ENCODE measurements at regions of chr1 and their contacts with region 1.

Region 1: DNA sequence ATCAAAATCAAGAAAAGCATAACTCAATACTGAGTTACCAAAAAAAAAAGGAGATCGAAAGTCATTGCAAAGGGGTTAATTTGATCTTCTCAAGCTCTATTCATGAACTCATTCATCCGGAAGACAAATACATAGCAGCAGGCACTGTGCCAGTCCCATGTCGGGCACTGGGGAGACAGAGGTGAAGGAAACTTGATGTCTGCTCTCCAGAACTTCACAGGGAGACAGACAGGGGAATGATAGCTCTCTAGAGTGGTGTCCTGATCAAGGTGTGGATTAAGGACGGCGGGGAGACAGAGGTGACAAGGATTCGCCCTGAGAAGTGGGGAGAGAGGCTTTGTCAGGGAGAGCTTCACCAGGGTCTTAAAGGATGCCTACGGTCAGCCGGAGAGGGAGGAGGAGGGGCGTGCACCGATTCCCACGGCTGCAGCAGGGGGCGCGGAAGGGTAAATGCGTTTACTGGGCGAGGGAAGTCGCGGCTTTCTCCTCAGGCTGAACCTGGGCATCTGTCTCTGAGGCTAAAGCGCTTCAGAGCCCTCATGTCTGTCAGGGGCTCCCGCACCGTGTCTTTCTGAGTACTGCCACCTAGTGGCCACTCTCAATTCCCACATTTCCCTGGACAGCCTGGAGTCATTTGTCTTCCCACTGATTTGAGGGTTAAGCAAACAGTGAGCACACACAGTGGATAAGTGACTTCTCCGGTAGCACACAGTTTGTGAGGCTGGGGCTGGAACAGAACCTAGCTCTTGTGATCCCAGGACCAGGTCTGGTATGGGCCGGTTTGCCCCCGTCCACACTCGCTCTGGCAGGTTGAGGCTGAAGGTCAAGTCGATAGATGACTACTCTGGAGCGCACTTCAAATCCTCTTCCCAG is 152.8 kb downstream of the TENT5C start:
- DNase-seq: peak; percentile 80 to 83
- H3K4me3 ChIP-seq: peak overlapping the region; percentile 60
- H3K27ac ChIP-seq: no peak overlapping the region
- H3K4me1 ChIP-seq: peaks cover 21% of the 10 kb centered on the region
- H3K27me3 ChIP-seq: no peaks in the 10 kb centered on the region
- CTCF ChIP-seq: peak; percentile 98

Region 2: DNA sequence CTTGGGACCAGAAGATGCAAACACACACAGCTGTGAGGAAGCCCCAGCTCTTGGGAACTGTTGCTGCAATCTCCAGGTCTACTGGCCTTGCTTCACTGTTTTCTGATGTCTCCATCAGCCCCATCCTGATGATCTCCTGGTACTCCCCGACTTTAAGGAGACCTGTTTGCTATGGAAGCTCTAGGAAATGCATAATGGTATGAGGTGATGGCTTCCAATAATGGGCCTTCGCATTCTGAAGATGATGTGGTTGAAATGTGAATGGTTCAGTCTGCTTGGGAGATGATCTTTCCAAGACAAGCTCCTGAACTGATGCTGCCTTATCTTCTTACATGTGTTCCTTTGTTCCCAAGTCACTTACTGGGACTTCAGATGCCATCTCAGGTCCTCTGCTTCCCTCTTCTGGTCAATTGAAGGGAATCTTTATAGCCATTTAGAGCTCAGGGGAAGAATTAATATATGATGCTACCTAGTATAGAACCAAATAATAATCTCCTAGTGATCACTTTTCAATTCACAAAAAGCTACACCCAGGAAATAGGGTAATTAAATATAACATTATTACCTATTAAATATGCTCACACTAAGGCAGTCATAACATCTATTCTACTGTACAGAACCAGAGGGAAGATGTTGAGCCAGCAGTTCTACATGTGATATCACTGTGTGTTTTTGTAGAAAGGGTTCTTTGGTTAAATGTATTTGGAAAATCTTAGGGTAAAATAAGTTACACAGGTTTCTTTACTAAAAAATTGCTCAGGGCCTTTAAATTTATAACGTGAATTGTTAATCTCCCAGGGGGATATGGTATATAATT is 474.1 kb before region 1 on chr1:
- CTCF ChIA-PET with region 1: no interaction called
- POLR2A ChIA-PET with region 1: no interaction called
- intact Hi-C with region 1: loop called (anchors 10 kb)
- DNase-seq: peak; percentile 39 to 81
- H3K4me3 ChIP-seq: no peak overlapping the region
- H3K27ac ChIP-seq: no peak overlapping the region
- H3K4me1 ChIP-seq: peaks cover 10% of the 10 kb centered on the region
- H3K27me3 ChIP-seq: no peaks in the 10 kb centered on the region
- CTCF ChIP-seq: peak; percentile 98

Region 3: DNA sequence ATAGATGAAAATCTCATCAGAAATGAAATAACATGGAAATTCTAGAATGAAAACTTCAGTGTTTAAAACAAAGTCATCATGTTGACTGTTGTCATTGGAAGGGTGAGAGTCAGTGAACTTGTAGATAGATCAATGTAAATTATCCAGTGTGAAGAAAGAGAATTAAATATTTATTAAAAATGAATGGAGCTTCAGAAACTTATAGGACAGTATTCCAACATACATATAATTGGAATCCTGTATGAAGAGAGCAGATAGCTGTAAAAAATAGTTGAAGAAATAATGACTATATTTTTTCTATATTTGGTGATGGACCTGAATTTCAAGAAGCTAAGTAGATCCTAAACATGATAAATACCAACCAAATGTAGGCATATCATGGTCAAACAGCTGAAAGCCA is 331.4 kb before region 1 on chr1:
- CTCF ChIA-PET with region 1: no interaction called
- POLR2A ChIA-PET with region 1: no interaction called
- intact Hi-C with region 1: no loop called
- DNase-seq: no peak
- H3K4me3 ChIP-seq: no peak overlapping the region
- H3K27ac ChIP-seq: no peak overlapping the region
- H3K4me1 ChIP-seq: no peaks in the 10 kb centered on the region
- H3K27me3 ChIP-seq: no peaks in the 10 kb centered on the region
- CTCF ChIP-seq: no peak

Region 4: DNA sequence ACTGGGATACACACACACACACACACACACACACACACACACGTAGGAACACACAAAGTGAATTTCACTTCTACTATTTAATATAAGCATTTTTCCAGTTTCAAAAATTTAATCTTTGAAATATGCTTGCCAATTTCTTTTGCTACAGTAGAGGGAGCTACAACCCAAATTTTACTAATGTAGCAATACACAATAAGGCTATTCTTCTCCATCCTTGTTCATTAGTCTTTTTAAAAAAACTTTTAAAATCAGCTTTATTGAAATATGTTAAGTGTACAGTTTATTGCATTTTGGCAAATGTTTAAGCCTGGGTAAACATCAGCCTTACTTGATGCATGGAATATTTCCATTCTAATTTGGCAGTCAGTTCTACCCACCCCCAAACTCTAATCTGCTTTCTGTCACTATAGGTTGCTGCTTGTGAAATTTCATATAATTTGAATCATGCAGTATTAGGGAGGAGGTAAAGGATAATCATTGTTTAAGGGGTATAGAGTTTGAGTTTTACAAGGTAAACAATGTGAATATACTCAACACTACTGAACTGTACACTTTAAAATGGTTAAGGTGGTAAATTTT is 245.8 kb before region 1 on chr1:
- CTCF ChIA-PET with region 1: interaction called, 13 read pairs
- POLR2A ChIA-PET with region 1: interaction called, 3 read pairs
- intact Hi-C with region 1: loop called (anchors 1 kb)
- DNase-seq: no peak
- H3K4me3 ChIP-seq: no peak overlapping the region
- H3K27ac ChIP-seq: no peak overlapping the region
- H3K4me1 ChIP-seq: no peaks in the 10 kb centered on the region
- H3K27me3 ChIP-seq: no peaks in the 10 kb centered on the region
- CTCF ChIP-seq: peak; percentile 97

Region 5: GRCh38 chr1:117605774-117606648 is 152.7 kb before region 1 on chr1 and contains the start of gene TENT5C:
- CTCF ChIA-PET with region 1: interaction called, 15 read pairs
- POLR2A ChIA-PET with region 1: no interaction called
- intact Hi-C with region 1: loop called (anchors 1 kb)
- DNase-seq: peak; percentile 96 to 99
- H3K4me3 ChIP-seq: peak within 1 kb of the TSS; percentile 71
- H3K27ac ChIP-seq: peak within 1 kb of the TSS; percentile 39
- H3K4me1 ChIP-seq: peaks cover 14% of the 10 kb centered on the region
- H3K27me3 ChIP-seq: no peaks in the 10 kb centered on the region
- CTCF ChIP-seq: peak; percentile 24; the same call in 1 of the 2 replicates
- total RNA-seq, gene TENT5C: 3.9 and 4.3 TPM in 2 replicates

Region 6: GRCh38 chr1:117780687-117781475 is 22.2 kb after region 1 on chr1:
- CTCF ChIA-PET with region 1: no interaction called
- POLR2A ChIA-PET with region 1: no interaction called
- intact Hi-C with region 1: no loop called
- DNase-seq: no peak
- H3K4me3 ChIP-seq: no peak overlapping the region
- H3K27ac ChIP-seq: no peak overlapping the region
- H3K4me1 ChIP-seq: no peaks in the 10 kb centered on the region
- H3K27me3 ChIP-seq: no peaks in the 10 kb centered on the region
- CTCF ChIP-seq: no peak

Region 7: DNA sequence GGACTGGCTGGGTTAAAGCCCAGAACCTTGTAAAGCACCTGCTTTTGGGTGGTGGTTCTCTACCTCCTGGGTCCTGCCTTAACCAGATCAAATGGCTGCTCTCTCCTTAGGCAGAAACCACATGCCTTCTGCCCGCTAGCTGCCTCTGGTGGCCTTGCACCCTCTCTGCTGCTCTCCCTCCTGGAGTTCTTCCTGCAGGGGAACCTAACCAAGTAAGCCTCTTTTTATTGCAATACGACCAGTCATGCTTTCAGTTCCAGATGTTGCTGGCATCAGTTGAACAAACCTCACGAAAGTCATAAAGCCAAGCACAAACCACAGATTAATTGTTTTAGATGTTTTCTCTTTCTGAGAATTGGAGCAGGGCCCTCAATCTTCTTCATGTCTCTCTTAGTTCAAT is 51.9 kb after region 1 on chr1:
- CTCF ChIA-PET with region 1: no interaction called
- POLR2A ChIA-PET with region 1: no interaction called
- intact Hi-C with region 1: no loop called
- DNase-seq: no peak
- H3K4me3 ChIP-seq: no peak overlapping the region
- H3K27ac ChIP-seq: no peak overlapping the region
- H3K4me1 ChIP-seq: no peaks in the 10 kb centered on the region
- H3K27me3 ChIP-seq: no peaks in the 10 kb centered on the region
- CTCF ChIP-seq: no peak

Region 8: DNA sequence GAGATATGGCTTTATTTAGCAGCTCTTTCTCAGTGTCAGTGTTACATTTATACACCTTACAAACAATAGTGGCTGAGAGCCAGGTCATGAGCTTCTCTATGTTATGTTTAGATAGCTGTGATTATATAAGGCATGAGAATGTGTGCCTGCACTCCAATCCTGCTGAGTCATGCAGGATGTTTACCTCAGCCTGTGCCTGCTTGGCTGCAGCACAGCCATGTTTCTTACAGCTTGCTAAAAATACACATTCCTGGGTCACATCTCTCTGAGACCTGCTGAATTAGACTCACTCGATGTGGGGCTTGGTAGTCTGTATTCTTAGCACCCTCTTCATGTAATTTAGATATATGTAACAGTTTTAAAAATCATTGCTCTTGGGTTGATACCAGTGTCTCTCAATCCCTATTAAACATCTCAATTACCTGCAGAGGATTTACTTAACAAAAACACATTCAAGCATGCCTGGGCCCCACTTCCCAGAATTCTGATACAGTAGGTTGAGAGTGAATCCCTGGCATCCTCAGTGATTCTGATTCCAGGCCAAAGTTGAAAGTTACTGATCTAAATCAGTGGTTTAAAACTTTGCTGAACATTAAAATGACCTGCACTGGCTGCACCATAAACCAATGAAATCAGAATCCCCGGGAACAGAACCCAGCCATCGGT is 63.2 kb after region 1 on chr1:
- CTCF ChIA-PET with region 1: no interaction called
- POLR2A ChIA-PET with region 1: no interaction called
- intact Hi-C with region 1: loop called (anchors 2 kb)
- DNase-seq: peak; percentile 62 to 93
- H3K4me3 ChIP-seq: no peak overlapping the region
- H3K27ac ChIP-seq: peak overlapping the region; percentile 50
- H3K4me1 ChIP-seq: peaks cover 46% of the 10 kb centered on the region
- H3K27me3 ChIP-seq: no peaks in the 10 kb centered on the region
- CTCF ChIP-seq: no peak

Region 9: DNA sequence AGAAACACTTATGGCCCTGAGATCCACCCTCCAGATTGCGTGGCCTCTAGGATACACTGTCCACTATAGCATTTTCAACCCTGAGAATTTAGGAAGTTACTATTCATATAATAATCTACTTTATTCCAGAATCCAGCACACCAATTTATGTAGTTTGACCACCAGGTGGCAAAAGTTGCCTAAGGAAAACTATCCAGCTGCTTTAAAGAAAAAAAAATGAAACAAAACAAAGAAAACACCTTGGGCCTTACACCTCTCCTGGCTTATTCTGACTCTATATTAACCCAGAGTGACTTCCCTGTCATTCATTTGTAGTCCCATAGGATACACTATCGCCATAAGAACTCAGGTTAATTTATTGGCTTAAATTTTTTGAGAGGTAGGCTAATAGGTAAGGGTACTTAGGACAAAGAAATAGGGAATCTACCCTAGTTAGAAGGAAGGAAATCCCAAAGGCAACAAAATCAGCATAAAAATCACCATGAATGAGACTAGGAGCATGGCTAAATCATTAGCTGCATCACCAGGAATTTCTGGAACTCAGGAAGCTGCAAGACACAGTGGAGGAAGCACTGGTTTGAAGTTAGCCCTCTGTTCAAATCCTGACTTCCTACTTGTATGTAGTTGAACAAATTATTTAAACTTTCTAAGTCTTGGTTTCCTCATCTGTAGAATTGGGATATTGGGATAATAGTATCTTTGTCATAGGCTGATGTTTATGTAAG is 318.8 kb after region 1 on chr1:
- CTCF ChIA-PET with region 1: no interaction called
- POLR2A ChIA-PET with region 1: no interaction called
- intact Hi-C with region 1: no loop called
- DNase-seq: peak in 1 of 2 experiments; percentile 2
- H3K4me3 ChIP-seq: no peak overlapping the region
- H3K27ac ChIP-seq: no peak overlapping the region
- H3K4me1 ChIP-seq: no peaks in the 10 kb centered on the region; the same call in 1 of the 2 replicates
- H3K27me3 ChIP-seq: no peaks in the 10 kb centered on the region
- CTCF ChIP-seq: peak; percentile 89

Measured in PC-9 (cell line).